ENCODE measurements at regions of chr18 and their contacts with region 1.

Region 1: GRCh38 chr18:34661464-34662111 is 48.5 kb upstream of the DTNA start:
- DNase-seq: no peak
- H3K4me3 ChIP-seq: no peak overlapping the region
- H3K27ac ChIP-seq: peak overlapping the region in 1 of 2 donors; percentile 3
- H3K4me1 ChIP-seq: peaks cover 6 to 22% of the 10 kb centered on the region in 2 donors
- H3K27me3 ChIP-seq: no peaks in the 10 kb centered on the region
- CTCF ChIP-seq: peak; percentile 33 to 73 (median 55)

Region 2: GRCh38 chr18:33577685-33578517 is 1083.7 kb before region 1 on chr18 and contains the start of gene ASXL3:
- intact Hi-C with region 1: loop called (anchors 10 kb)
- DNase-seq: peak in 1 of 2 donors; percentile 76
- H3K4me3 ChIP-seq: peak within 1 kb of the TSS; percentile 93 to 94
- H3K27ac ChIP-seq: peak within 1 kb of the TSS; percentile 88 to 92
- H3K4me1 ChIP-seq: peaks cover 0 to 6% of the 10 kb centered on the region in 2 donors
- H3K27me3 ChIP-seq: no peaks in the 10 kb centered on the region
- CTCF ChIP-seq: no peak
- total RNA-seq, gene ASXL3: 6.6 TPM

Region 3: GRCh38 chr18:34592961-34593382 is 68.6 kb before region 1 on chr18:
- intact Hi-C with region 1: loop called (anchors 2 kb)
- DNase-seq: peak in 1 of 2 donors; percentile 78
- H3K4me3 ChIP-seq: peak overlapping the region; percentile 42 to 67
- H3K27ac ChIP-seq: peak overlapping the region; percentile 67 to 76
- H3K4me1 ChIP-seq: peaks cover 0 to 13% of the 10 kb centered on the region in 2 donors
- H3K27me3 ChIP-seq: no peaks in the 10 kb centered on the region
- CTCF ChIP-seq: no peak

Region 4: DNA sequence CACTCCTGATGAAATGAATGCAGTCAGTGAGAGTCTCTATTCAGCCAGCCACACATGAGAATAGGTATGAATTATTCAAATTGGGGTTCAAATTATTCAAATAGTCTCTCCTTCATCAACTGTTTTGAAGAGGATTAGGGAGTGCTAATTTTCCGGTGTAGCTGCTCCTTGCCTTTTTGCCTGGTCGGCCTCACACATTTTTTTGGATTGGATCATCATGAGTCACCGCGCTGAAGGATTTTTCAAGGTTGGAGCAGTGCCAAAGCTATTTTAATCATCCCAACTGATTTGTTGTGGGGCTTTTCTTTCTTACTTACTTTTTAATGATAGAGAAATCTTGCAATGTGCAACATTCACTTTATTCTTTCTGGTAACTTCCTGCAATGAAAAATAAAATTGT is 46.1 kb after region 1 on chr18:
- intact Hi-C with region 1: loop called (anchors 2 kb)
- DNase-seq: peak in 1 of 2 donors; percentile 86
- H3K4me3 ChIP-seq: peak overlapping the region; percentile 18 to 25
- H3K27ac ChIP-seq: peak overlapping the region; percentile 62 to 63
- H3K4me1 ChIP-seq: peaks cover 9 to 28% of the 10 kb centered on the region in 2 donors
- H3K27me3 ChIP-seq: no peaks in the 10 kb centered on the region
- CTCF ChIP-seq: no peak

Region 5: DNA sequence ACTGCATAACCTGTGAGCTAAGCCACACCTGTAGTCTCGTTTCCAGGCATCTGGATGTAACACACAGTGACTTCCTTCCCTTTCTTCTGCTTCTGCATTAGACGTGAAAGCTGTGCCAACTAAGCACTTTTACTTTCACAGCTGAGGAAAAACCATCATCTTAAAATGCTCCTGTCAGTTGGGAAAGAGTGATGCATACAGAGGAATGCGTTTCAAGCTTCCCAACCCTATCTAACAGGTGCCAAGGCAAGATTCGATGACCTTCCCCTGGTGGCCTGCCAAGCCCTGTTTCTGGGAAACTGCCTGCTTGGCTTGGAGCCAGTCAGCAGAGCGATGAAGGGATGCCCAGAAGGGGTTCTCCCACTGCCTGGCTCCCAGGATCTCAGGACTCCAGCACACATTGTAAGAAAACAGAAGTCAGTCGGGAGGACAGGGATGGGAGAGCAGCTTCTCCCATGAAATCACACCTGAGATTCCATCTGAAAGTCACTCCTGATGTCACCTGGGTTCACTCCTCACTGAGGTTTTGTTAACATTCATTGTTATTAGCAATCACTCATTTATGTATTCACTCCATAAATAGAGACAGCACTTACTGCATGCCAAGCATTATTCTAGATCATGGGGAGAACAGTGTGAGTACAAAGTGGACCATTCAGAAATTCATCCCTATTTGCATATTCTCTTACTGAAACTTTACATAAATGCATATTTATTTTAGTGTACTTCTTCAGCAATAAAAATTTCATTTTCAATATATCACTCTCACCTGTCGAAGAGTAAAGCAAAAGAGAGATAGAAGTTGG is 112.6 kb after region 1 on chr18:
- intact Hi-C with region 1: loop called (anchors 5 kb)
- DNase-seq: peak in 1 of 2 donors; percentile 74
- H3K4me3 ChIP-seq: peak overlapping the region in 1 of 2 donors; percentile 11
- H3K27ac ChIP-seq: peak overlapping the region; percentile 29 to 63
- H3K4me1 ChIP-seq: peaks cover 0 to 23% of the 10 kb centered on the region in 2 donors
- H3K27me3 ChIP-seq: no peaks in the 10 kb centered on the region
- CTCF ChIP-seq: no peak

Region 6: DNA sequence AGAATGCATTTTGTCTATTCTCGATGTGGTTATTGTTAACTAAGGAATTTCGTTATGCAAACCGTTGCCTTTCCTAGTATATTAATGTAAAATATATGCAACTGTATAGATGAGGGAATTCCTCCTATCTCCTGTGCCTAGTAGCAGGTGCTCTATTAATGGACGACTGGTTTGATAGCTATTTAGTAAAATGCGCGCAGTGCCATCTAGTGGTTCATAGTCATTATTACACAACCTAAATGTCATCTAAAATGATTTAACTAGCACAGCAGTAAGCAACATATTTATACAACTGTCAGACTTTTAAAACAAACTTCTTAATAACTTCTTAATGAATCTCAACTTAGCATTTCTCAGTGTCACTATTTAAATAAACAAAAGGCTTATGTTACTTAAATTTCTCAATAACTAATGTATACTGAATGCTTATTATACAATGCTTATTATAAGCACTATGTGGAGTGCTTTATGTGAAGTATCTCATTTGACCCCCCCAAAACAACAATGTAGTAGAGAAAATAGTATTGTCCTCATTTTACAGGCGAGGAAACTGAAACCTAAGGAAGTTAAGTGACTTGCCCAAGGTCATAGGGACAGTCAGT is 126.4 kb after region 1 on chr18:
- intact Hi-C with region 1: loop called (anchors 2 kb)
- DNase-seq: no peak
- H3K4me3 ChIP-seq: no peak overlapping the region
- H3K27ac ChIP-seq: no peak overlapping the region
- H3K4me1 ChIP-seq: no peaks in the 10 kb centered on the region
- H3K27me3 ChIP-seq: no peaks in the 10 kb centered on the region
- CTCF ChIP-seq: peak; percentile 48 to 71 (median 68)

Region 7: DNA sequence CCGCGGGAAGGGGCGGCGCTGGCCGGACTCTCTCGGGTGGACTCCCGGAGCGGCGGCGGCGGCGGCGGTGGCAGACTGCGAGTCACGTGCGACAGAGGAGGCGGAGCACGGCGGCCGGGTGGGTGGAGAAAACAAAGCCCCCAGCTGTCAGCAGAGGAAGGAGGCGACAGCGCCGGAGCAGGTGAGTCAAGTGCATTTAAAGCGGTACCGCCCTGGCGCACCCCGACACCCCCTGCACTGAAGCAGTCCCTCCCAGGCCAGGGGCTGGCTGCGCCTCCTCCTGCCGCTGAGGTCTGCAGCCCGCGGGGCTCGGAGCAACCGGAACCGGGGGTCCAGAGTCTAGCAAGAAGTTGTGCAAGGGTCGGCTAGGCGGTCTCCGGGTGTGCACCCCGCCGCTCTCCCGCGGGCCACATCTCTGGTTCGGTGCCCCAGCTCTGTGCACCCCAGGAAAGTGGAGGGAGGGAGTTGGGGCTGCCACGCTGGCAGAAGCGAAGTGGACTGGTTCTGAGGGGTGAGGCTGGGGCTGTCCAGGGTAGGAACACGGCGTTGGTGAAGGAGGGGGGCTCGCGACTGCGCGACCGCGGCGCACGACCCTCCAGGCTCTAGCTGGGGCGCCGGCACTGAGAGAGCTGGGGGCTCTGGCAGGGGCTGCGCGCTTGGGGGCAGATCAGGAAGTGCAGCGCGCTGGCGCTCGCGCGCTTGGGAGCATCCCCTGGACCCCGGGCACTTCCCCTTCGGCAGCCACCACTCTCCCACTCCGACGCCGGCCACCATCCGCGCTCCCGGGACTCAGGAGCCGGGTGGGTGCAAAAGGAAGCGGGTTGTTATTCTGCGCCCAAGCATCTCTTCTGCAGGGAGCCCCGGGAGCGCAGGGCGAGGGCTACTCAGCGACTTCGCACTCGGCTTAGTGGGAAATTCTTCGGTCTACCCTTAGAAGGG is 315.6 kb after region 1 on chr18:
- intact Hi-C with region 1: loop called (anchors 5 kb)
- DNase-seq: peak; percentile 27 to 90
- H3K4me3 ChIP-seq: peak overlapping the region; percentile 81 to 94
- H3K27ac ChIP-seq: peak overlapping the region; percentile 58 to 71
- H3K4me1 ChIP-seq: peaks cover 0 to 5% of the 10 kb centered on the region in 2 donors
- H3K27me3 ChIP-seq: no peaks in the 10 kb centered on the region
- CTCF ChIP-seq: no peak

Measured in ascending aorta (tissue), 2 donors.